CD4-positive, alpha-beta memory T cell (primary cell): ENCODE measurements at regions of chr15 and their contacts with region 1.

Region 1: GRCh38 chr15:64004582-64004981 is 41.7 kb downstream of the DAPK2 start:
- DNase-seq: no peak
- H3K4me3 ChIP-seq: no peak overlapping the region
- H3K4me3 Mint-ChIP-seq: no peak overlapping the region
- H3K27ac ChIP-seq: no peak overlapping the region
- H3K27ac Mint-ChIP-seq: peak overlapping the region in 2 of 7 donors; percentile 37 to 84
- H3K4me1 ChIP-seq: peaks cover 26% of the 10 kb centered on the region
- H3K4me1 Mint-ChIP-seq: peaks cover 17 to 38% (median 26%) of the 10 kb centered on the region in 4 donors
- H3K27me3 ChIP-seq: no peaks in the 10 kb centered on the region
- H3K27me3 Mint-ChIP-seq: peaks cover 0 to 2% of the 10 kb centered on the region in 2 donors

Region 2: DNA sequence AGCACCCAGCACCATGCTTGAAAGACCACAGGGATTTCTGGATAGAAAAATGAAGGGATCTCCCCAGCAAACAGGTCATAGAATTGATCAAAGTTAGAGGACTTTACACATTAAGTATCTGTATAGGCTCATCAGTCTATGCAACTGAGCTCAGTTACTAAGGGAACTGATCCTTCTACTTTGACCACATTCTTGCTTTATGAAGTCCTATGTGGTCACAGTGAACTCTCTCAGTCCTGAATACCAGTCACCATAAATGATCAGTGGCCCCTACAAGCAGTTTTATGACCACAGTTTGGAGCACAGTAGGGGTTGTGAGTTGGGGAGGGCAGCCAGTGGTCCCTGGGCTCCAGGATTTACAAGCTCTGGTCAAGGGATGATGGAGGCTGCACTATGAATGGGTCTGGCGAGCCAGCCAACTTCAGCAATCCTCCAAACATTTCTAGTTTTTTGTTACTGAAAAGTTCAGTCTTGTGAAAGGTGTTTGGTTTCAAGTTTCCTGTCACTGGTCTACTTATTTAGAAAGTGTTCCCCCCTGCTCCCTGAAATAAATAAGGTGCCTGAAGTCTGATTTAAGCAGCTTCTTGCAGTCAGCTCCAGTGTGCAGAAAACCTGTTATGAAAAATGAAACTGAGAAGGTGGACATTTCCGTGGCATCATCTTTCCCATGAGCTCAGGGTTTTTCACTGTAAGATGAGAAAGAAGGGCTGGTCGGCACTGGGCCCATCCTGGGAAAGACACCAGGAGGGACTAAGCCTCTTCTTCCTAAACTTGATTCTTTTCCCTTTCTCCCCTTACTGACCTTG is 33.8 kb before region 1 on chr15:
- CTCF ChIA-PET with region 1: interaction called, 14 read pairs
- POLR2A ChIA-PET with region 1: interaction called, 26 read pairs
- intact Hi-C with region 1: no loop called
- DNase-seq: peak; percentile 7 to 58 (median 19)
- H3K4me3 ChIP-seq: peak overlapping the region in 1 of 2 donors; percentile 4
- H3K4me3 Mint-ChIP-seq: peak overlapping the region; percentile 8 to 91 (median 78)
- H3K27ac ChIP-seq: peak overlapping the region; percentile 34
- H3K27ac Mint-ChIP-seq: peak overlapping the region; percentile 84 to 99 (median 95)
- H3K4me1 ChIP-seq: peaks cover 37% of the 10 kb centered on the region
- H3K4me1 Mint-ChIP-seq: peaks cover 22 to 50% (median 33%) of the 10 kb centered on the region in 4 donors
- H3K27me3 ChIP-seq: no peaks in the 10 kb centered on the region
- H3K27me3 Mint-ChIP-seq: no peaks in the 10 kb centered on the region